Activated naive CD4-positive, alpha-beta T cell treated with anti-CD3 and anti-CD28 coated beads for 36 hours (primary cell): ENCODE measurements at regions of chr6 and their contacts with region 1.

Region 1: DNA sequence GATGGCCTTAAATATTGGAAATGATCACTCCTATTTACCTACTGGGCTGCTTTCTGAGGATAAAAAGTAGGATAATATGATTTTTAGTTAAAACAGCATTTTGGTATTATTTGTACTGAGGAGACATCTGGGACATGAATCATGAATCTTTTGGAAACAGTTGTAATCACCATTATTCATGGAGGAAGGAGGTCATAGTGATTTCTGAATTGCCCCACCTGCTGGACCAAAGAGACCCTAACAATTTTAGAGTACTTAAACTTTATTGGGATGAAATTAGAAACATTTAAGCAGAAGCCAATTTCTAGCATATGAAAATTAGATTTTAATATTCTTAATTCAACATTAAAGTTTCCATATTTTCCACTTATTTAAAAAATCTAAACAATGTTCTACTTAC is 108.4 kb upstream of the SIM1 start:
- DNase-seq: no peak
- H3K4me3 Mint-ChIP-seq: no peak overlapping the region
- H3K27ac Mint-ChIP-seq: no peak overlapping the region
- H3K4me1 Mint-ChIP-seq: no peaks in the 10 kb centered on the region
- H3K27me3 Mint-ChIP-seq: no peaks in the 10 kb centered on the region

Region 2: GRCh38 chr6:100549406-100550167 is 23.6 kb before region 1 on chr6:
- CTCF ChIA-PET with region 1: no interaction called
- intact Hi-C with region 1: no loop called
- DNase-seq: no peak
- H3K4me3 Mint-ChIP-seq: no peak overlapping the region
- H3K27ac Mint-ChIP-seq: no peak overlapping the region
- H3K4me1 Mint-ChIP-seq: no peaks in the 10 kb centered on the region
- H3K27me3 Mint-ChIP-seq: no peaks in the 10 kb centered on the region

Region 3: DNA sequence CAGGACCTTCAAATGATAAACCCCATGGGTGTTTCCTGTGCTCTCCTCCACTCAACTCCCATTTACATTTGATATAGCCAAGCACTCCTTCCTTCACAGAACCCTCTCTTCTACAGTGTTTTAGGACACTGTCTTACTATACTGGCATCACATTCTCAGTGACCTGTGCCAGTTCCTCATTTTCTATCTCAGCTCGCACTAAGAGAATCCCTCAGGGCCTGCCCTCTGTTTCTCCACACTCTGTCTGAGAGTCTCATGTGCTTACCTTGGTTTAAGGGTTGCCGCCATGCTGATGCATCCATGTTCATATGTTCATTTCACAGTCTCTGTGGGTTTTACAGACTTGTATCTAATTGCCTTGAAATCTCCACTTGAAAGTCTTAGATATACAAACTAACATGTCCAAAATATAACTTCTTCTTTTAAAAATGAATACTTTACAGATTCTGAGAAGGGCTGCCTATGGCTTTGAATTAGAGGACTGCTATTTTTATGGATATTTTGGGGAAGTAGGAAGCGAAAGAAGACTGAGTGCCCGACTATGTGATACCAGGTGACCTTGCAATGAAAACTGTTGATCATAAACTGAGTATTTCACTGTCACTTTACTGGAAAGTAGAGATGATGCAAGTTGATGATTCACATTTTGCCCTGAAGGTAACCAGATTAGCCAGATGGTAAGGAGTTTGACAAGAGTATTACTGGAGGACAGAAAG is 44.6 kb after region 1 on chr6:
- CTCF ChIA-PET with region 1: no interaction called
- intact Hi-C with region 1: loop called (anchors 1 kb)
- DNase-seq: no peak
- H3K4me3 Mint-ChIP-seq: no peak overlapping the region
- H3K27ac Mint-ChIP-seq: no peak overlapping the region
- H3K4me1 Mint-ChIP-seq: no peaks in the 10 kb centered on the region
- H3K27me3 Mint-ChIP-seq: no peaks in the 10 kb centered on the region